ENCODE measurements at regions of chr22 and their contacts with region 1.

Region 1: DNA sequence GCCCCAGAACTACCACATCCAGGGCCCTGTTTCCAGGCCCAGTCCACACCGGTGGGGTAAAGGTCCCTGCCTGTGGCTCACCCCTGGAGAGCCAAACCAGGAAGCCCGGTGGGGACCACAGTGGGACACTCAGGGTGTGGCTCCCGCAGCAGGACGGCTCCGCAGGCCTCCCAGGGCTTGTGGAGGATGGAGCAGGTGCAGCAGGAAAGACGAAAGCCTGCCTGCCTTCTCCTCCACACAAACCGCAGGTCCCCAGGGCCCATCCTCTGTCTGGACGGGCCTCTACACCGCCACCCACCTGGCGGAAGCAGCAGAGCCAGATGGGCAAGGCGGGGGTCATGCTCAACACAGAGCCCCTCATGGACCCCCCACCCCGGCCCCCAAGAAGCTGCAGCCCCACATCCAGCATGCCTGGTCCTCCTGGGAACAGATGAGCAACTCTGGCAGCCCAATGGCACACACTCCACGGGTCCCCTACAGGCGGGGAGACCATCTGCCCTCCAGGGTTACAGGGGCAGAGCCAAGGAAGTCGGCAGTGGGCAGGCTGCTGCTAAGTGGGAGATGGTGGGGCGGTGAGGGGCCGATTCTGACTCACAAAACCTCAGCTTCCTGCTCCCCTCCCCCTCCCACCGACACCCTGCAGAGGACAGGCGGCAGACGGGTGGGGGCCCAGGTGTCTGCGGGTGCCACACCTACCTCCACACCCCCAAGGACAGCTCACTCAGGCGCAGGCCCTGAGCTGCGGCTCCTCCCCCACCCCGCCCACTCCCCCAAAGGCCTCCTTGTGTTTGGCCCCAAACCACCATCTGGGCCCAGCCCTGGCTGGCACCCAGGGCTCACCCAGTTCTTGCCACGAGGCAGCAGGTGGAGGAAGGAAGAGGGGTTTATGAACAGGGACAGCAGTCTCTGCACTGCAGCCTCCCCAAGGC is 5.2 kb downstream of the SBF1 start:
- DNase-seq: peak; percentile 88 to 99 (median 98)
- ATAC-seq: peak; percentile 86
- H3K4me3 ChIP-seq: peak overlapping the region; percentile 49
- H3K4me3 Mint-ChIP-seq: peak overlapping the region; percentile 89
- H3K27ac ChIP-seq: peak overlapping the region; percentile 82 to 94
- H3K27ac Mint-ChIP-seq: peak overlapping the region; percentile 94
- H3K4me1 ChIP-seq: peaks cover 72% of the 10 kb centered on the region
- H3K4me1 Mint-ChIP-seq: peaks cover 62% of the 10 kb centered on the region
- H3K27me3 ChIP-seq: no peaks in the 10 kb centered on the region
- H3K27me3 Mint-ChIP-seq: no peaks in the 10 kb centered on the region
- CTCF ChIP-seq: peak; percentile 21

Region 2: GRCh38 chr22:50357776-50358175 is 111.9 kb before region 1 on chr22:
- CTCF ChIA-PET with region 1: no interaction called
- POLR2A ChIA-PET with region 1: no interaction called
- intact Hi-C with region 1: no loop called
- DNase-seq: no peak
- ATAC-seq: no peak
- H3K4me3 ChIP-seq: no peak overlapping the region
- H3K4me3 Mint-ChIP-seq: no peak overlapping the region
- H3K27ac ChIP-seq: no peak overlapping the region
- H3K27ac Mint-ChIP-seq: no peak overlapping the region
- H3K4me1 ChIP-seq: peaks cover 28% of the 10 kb centered on the region
- H3K4me1 Mint-ChIP-seq: peaks cover 42% of the 10 kb centered on the region
- H3K27me3 ChIP-seq: no peaks in the 10 kb centered on the region
- H3K27me3 Mint-ChIP-seq: no peaks in the 10 kb centered on the region
- CTCF ChIP-seq: no peak

Region 3: GRCh38 chr22:50444663-50445062 is 25.0 kb before region 1 on chr22:
- CTCF ChIA-PET with region 1: no interaction called
- POLR2A ChIA-PET with region 1: interaction called, 11 read pairs
- intact Hi-C with region 1: no loop called
- DNase-seq: no peak
- ATAC-seq: no peak
- H3K4me3 ChIP-seq: no peak overlapping the region
- H3K4me3 Mint-ChIP-seq: no peak overlapping the region
- H3K27ac ChIP-seq: peak overlapping the region in 1 of 2 donors; percentile 48
- H3K27ac Mint-ChIP-seq: peak overlapping the region; percentile 69
- H3K4me1 ChIP-seq: peaks cover 25% of the 10 kb centered on the region
- H3K4me1 Mint-ChIP-seq: no peaks in the 10 kb centered on the region
- H3K27me3 ChIP-seq: no peaks in the 10 kb centered on the region
- H3K27me3 Mint-ChIP-seq: no peaks in the 10 kb centered on the region
- CTCF ChIP-seq: no peak